Calu3 (cell line): ENCODE measurements at regions of chr5 and their contacts with region 1.

Region 1: GRCh38 chr5:87099246-87099925 is 168.3 kb upstream of the RASA1 start:
- DNase-seq: no peak
- H3K4me3 Mint-ChIP-seq: no peak overlapping the region
- H3K27ac Mint-ChIP-seq: peak overlapping the region; percentile 93
- H3K4me1 Mint-ChIP-seq: peaks cover 64% of the 10 kb centered on the region
- H3K27me3 Mint-ChIP-seq: no peaks in the 10 kb centered on the region
- CTCF ChIP-seq: no peak

Region 2: DNA sequence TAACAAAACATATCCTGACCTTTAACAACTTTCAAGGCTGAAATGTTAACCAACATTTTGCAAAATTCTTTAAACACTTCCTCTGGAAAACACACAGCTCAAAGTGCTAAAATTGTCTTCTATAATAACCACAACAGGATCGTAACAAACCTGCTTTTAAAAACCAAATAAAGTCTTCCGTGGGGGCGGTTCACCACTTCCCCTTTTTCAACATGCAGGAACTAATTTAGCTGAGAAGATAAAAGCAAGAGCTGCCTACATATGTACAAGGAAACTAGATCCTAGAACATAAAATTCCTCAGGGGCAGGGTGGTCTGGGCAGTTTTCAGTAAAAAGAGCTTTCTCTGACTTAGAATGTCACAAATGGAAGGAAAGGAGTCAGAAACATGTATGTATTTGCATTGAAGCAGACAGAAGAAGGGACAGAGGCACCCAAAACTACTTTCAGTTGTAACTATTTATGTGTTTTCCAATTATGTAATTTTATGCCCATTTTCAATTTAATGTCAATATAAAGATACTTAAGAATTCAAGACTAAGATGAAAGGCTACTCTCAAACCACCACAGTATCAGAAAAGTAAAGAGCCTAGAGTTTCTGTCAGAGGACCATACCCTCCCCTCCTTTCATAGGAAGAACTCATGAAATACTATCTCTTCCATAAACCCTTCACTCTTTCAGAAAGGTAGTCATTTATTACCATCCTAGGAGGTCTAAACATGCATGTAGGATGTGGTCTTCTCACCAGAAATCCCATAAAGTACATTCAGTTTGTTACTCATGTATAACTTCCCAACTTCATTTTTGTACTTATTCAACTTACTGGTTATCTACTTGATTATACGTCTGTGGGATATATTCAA is 17.6 kb before region 1 on chr5:
- CTCF ChIA-PET with region 1: interaction called, 3 read pairs
- intact Hi-C with region 1: loop called (anchors 2 kb)
- DNase-seq: no peak
- H3K4me3 Mint-ChIP-seq: no peak overlapping the region
- H3K27ac Mint-ChIP-seq: peak overlapping the region; percentile 53
- H3K4me1 Mint-ChIP-seq: peaks cover 32% of the 10 kb centered on the region
- H3K27me3 Mint-ChIP-seq: no peaks in the 10 kb centered on the region
- CTCF ChIP-seq: no peak

Region 3: DNA sequence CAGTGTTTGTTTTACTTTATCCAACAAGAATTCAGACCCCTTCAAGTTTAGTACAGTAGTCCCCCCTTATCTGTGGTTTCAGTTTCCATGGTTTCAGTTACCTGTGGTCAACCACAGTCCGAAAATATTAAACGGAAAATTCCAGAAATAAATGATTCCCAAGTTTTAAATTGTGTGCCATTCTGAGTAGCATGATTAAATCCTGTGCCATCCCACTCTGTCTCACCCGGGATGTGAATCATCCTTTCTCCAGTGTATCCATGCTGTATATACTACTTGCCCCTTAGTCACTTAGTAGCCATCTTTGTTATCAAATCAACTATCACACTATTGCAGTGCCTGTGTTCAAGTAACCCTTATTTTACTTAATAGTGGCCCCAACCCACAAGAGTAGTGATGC is 14.5 kb after region 1 on chr5:
- CTCF ChIA-PET with region 1: interaction called, 4 read pairs
- intact Hi-C with region 1: loop called (anchors 2 kb)
- DNase-seq: peak; percentile 41
- H3K4me3 Mint-ChIP-seq: no peak overlapping the region
- H3K27ac Mint-ChIP-seq: peak overlapping the region; percentile 99
- H3K4me1 Mint-ChIP-seq: peaks cover 75% of the 10 kb centered on the region
- H3K27me3 Mint-ChIP-seq: no peaks in the 10 kb centered on the region
- CTCF ChIP-seq: no peak

Region 4: GRCh38 chr5:88203981-88204750 is 1104.8 kb after region 1 on chr5:
- CTCF ChIA-PET with region 1: no interaction called
- intact Hi-C with region 1: no loop called
- DNase-seq: no peak
- H3K4me3 Mint-ChIP-seq: no peak overlapping the region
- H3K27ac Mint-ChIP-seq: no peak overlapping the region
- H3K4me1 Mint-ChIP-seq: no peaks in the 10 kb centered on the region
- H3K27me3 Mint-ChIP-seq: no peaks in the 10 kb centered on the region
- CTCF ChIP-seq: no peak